ENCODE measurements at regions of chr22 and their contacts with region 1.

Region 1: GRCh38 chr22:22397277-22397870 is 111.2 kb downstream of the ZNF280B start:
- DNase-seq: no peak
- H3K4me3 ChIP-seq: no peak overlapping the region
- H3K27ac ChIP-seq: no peak overlapping the region
- H3K4me1 ChIP-seq: no peaks in the 10 kb centered on the region
- H3K27me3 ChIP-seq: peaks cover 2 to 12% of the 10 kb centered on the region in 2 experiments
- CTCF ChIP-seq: no peak
- POLR2A ChIP-seq: no peak

Region 2: DNA sequence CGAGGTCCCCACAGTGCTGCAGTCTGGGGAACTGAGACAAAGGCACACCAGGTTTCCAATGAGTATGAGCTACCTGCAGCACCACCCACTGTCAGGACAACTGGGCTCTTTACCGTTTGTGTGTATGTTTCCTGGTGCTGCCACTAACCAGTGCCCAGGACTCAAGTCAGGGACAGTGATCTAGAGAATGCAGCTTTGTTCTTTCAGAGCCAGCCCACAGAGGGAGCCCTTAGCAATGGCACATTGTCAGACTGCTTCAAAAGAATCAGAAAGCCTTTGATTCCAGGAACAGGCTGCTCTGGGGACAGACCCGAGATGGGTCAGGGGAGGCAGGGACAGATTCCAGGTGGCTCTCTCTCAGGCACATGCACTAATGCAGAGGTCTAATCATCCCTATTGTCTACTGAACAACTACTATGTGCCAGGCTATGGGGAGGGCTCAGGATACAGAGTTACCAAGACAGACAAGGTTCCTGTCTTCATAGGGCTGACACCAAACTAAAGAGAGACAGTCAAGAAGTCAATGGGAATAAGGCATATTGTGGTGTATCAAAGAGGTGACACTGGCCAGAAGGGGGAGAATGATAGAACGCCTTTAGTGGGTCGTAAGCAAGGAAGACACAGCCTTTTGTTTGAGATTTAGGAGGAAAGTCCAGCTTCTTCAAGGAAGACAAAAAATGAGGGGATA is 49.1 kb before region 1 on chr22:
- CTCF ChIA-PET with region 1: interaction called, 10 read pairs
- POLR2A ChIA-PET with region 1: no interaction called
- dilution Hi-C with region 1: no loop called
- intact Hi-C with region 1: loop called (anchors 1 kb)
- DNase-seq: no peak
- H3K4me3 ChIP-seq: no peak overlapping the region
- H3K27ac ChIP-seq: no peak overlapping the region
- H3K4me1 ChIP-seq: no peaks in the 10 kb centered on the region
- H3K27me3 ChIP-seq: peaks cover 11 to 17% of the 10 kb centered on the region in 2 experiments
- CTCF ChIP-seq: peak in 1 of 2 donors; percentile 23
- POLR2A ChIP-seq: no peak

Region 3: DNA sequence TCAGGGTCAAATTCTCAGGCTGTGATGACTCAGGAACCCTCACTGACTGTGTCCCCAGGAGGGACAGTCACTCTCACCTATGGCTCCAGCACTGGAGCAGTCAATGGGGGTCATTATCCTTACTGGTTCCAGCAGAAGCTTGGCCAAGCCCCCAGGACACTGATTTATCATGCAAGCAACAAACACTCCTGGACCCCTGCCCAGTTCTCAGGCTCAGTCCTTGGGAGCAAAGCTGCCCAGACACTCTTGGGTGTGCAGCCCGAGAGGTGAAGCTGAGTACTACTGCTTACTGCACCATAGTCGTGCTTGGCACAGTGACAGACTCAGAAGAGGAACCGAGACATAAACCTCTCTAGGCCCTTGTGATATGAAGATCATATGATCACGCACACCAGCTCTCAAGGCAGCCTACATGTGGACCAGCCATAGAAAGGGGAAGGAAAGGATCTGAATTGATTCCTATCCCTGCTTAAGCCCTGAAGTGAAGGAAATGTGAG is 53.0 kb after region 1 on chr22:
- CTCF ChIA-PET with region 1: no interaction called
- POLR2A ChIA-PET with region 1: no interaction called
- dilution Hi-C with region 1: no loop called
- intact Hi-C with region 1: no loop called
- DNase-seq: no peak
- H3K4me3 ChIP-seq: no peak overlapping the region
- H3K27ac ChIP-seq: no peak overlapping the region
- H3K4me1 ChIP-seq: no peaks in the 10 kb centered on the region
- H3K27me3 ChIP-seq: peaks cover 12 to 15% of the 10 kb centered on the region in 2 experiments
- CTCF ChIP-seq: no peak
- POLR2A ChIP-seq: no peak

Region 4: DNA sequence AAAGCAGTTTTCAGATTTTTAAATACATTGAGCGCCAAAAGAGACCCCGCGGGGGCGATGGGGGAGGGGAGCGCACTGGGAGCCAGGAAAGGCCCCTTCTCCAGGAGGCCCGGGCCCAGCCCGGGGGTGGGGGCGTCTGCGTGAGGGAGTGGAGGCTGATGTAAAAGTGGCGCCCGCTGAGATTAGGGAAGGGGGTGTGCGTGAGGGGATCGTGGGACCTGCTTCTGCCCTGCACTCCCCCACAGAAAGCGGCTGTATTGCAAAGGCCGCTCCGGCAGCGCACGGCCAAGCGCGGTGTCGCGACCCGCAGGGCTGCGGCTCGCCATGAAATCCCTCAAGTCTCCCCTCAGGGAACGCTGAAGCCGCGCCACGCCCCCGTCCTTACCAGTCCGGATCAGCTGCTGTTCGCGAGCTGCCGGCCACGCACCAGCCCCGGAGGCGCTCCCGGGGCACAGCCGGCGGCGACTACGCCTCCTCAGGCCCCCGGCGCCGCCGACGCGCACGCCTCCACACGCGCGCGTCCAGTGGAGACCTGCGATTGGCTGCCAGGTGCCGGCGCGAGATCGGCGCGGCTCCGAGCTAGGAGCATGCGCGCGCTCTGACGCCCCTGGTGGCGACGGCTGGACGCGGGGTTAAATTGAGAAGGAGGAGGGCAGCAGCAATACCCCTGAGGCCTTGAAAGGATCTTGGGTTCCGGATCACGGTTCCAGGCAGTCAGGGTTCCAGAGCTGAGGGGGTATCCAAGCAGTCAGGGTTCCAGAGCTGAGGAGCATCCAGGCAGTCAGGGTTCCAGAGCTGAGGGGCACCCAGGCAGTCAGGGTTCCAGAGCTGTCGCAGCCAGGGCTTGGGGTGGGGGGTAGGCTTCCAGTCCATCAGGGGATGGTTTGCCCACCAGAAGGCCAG is 111.2 kb after region 1 on chr22 and contains the start of gene ZNF280B:
- CTCF ChIA-PET with region 1: no interaction called
- POLR2A ChIA-PET with region 1: no interaction called
- dilution Hi-C with region 1: no loop called
- intact Hi-C with region 1: no loop called
- DNase-seq: peak; percentile 89
- H3K4me3 ChIP-seq: peak within 1 kb of the TSS; percentile 62 to 80 (median 62)
- H3K27ac ChIP-seq: peak within 1 kb of the TSS; percentile 16
- H3K4me1 ChIP-seq: peaks cover 4% of the 10 kb centered on the region
- H3K27me3 ChIP-seq: peaks cover 3 to 4% of the 10 kb centered on the region in 2 experiments
- CTCF ChIP-seq: peak; percentile 82 to 92
- POLR2A ChIP-seq: peak; percentile 39
- total RNA-seq, gene ZNF280B: 3.1 TPM in 2 replicates

Measured in endothelial cell of umbilical vein (primary cell).